ENCODE measurements at regions of chr18 and their contacts with region 1.

Region 1: GRCh38 chr18:46073474-46074331 is 1.6 kb upstream of the PSTPIP2 start:
- DNase-seq: peak; percentile 64 to 72
- H3K4me3 ChIP-seq: no peak overlapping the region
- CTCF ChIP-seq: no peak
- POLR2A ChIP-seq: no peak

Region 2: DNA sequence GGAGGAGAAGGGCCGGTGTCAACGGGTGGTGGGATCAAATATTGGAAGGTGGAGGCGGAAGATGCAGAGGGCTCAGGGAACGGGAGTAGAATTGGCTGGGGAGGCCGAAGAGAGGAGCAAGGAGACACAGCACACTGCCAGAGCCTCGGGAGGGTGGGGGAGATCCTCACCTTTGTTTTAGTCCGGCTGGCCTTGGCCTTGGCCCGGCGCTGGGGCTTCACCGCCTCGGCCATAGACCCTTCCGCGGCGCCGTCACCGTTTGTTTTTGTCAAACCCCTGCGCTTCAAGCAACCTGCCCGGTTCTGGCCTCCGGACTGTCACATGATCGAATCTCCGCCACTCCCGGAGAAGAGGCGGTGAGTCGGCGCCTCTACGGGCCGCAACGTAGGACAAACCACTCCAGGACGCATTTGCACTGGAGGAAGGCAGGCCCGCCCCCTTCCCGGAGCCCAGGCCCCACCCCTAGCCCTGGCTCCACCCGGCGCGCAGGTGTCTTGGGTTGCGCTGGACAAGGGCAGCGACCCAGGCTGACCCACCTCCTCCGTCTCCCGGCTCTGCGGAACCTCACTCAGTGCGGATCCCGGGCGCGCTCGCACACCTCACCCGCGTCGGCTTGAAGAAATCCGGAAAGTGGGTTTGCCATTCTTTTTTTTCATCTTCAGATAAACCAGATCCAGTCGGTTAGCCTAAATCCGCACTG is 106.5 kb before region 1 on chr18 and contains the start of gene EPG5:
- intact Hi-C with region 1: loop called (anchors 5 kb)
- DNase-seq: peak; percentile 95 to 99
- H3K4me3 ChIP-seq: peak within 1 kb of the TSS; percentile 60
- CTCF ChIP-seq: no peak
- POLR2A ChIP-seq: no peak
- total RNA-seq, gene EPG5: 22.5 to 44.0 (median 39.8) TPM

Region 3: GRCh38 chr18:46213295-46213694 is 139.6 kb after region 1 on chr18:
- intact Hi-C with region 1: no loop called
- DNase-seq: no peak
- H3K4me3 ChIP-seq: no peak overlapping the region
- CTCF ChIP-seq: no peak
- POLR2A ChIP-seq: no peak